ENCODE measurements at regions of chr17 and their contacts with region 1.

Region 1: DNA sequence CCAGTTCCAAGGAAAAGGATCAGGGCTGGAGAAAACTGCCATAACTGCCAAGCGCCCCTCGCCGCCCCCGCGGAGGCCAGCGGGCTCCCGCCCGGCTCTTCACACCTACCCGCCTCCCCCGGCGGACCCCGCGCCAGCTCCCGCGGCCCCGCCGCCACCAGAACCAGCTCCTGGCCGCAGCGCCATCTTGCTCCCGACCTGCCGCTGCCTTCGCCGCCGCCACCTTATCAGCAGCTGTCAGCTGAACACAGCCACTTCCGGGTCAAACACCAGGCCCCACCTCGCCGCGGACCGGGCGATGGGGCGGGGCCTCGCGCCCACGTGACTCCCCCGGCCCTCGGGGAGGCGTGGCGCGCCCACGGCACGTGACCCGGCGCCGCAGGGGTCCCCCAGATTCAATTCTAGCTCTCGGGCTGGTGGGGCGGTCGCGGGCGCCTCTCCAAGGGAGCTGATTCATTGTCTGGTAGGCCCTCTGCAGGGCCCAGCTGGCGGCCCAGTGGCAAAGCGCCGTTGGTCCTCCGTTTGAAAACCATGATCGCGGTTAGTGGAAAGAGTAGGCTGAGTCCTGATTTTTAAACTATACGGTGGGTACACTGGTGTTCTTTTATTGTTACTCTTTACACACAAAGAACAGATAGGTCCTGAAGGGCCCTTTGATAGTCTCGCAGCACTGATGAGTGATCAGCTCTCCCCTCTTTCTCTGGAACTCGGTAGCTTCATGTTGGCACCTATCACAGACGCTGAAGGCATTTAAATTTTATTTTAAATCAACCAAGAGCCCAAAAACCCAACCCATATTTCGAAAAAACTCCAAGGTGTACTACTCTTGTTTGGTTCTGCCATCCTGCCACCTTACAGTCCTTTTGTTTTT is at the start of gene SYNRG:
- DNase-seq: peak; percentile 93
- H3K4me3 Mint-ChIP-seq: peak within 1 kb of the TSS; percentile 84
- H3K27ac Mint-ChIP-seq: peak within 1 kb of the TSS; percentile 93
- H3K4me1 Mint-ChIP-seq: peaks cover 36% of the 10 kb centered on the region
- H3K27me3 Mint-ChIP-seq: no peaks in the 10 kb centered on the region
- total RNA-seq, gene SYNRG: 39.1 to 40.1 TPM

Region 2: DNA sequence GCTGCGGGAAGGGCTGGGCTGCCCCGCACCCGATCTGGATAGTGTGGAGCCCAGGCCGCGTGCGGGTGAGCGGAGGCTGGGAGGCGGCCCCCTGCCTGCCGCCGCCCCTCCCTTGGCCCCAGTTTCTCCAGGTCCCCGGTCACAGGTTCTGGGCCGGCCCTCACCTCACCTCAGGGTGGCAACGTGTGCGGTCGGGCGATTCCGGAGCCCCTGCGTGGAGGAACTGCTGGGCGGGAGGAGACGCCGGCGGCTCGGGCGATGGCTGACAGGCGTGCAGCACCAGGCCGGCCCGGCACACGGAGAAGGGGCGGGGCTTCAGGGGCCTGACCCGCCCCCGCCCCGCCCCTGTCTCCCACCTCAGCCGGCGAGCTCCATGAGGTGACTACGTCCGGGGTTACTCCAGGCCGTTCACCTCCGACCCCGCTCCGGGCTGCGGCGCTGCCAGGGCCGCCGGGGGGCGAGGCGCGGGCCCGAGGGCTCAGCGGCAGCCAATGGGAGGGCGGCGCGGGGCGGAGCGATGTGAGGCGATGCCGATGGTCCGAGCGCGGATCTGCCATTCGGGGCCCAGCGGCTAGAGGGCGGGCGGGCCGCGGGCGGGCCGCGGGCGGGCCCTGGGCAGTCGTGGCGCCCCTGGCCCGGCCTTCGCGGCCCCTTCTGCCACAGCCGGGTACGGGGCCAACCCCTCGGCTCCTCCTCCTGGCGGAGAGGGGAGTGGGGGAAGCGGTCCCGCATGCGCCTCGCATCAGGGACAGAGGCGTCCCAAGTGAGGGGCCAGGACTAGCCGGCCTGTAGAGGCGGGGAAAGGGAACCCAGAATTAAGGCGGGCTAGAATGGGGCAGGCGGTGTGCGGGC is 250.3 kb before region 1 on chr17:
- CTCF ChIA-PET with region 1: no interaction called
- intact Hi-C with region 1: loop called (anchors 2 kb)
- DNase-seq: peak; percentile 95
- H3K4me3 Mint-ChIP-seq: peak overlapping the region; percentile 86
- H3K27ac Mint-ChIP-seq: peak overlapping the region; percentile 76
- H3K4me1 Mint-ChIP-seq: peaks cover 21% of the 10 kb centered on the region
- H3K27me3 Mint-ChIP-seq: no peaks in the 10 kb centered on the region

Region 3: DNA sequence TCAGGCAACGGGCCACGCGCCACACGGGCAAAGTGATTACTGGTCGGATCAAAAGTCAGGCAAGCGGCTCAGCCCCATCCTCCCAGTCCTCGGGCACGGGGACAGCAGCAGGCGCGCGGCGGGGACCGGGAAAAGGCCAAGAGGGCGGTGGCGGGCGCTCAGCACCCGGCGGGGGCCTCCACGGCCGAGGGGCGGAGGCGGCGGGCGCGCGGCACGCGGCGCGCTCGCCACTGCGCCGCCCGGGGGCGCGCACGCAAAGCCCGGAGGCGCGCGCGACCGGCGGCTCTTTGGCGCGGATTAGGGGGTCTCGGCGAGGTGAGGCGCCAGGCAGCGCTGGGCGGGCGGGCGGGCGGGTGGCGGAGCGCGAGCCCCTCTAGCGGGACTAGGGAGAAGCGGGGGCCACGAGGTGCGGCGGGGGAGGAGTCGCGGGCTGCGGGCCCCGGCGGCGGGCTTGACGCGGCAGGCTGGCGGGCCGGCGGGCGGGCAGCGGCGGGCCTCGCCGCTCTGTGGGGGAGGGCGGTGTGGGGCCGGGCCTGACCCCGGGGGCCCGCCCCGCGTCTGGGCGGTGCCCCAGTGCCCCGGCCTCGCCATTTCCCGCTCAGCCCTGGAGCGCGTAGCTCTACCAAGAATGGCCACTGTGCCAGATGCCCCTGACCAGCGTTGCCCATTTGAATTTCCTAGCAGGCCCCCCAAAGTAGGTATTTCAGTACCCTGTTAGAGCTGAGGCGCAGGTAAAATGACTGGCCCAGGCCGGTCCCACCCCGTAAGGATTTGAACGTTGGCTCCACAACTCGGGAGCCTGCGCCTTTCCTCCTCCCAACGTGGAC is 202.6 kb before region 1 on chr17 and contains the starts of genes ACACA and TADA2A:
- CTCF ChIA-PET with region 1: no interaction called
- intact Hi-C with region 1: loop called (anchors 2 kb)
- DNase-seq: peak; percentile 74
- H3K4me3 Mint-ChIP-seq: peak within 1 kb of the TSS; percentile 97
- H3K27ac Mint-ChIP-seq: peak within 1 kb of the TSS; percentile 95
- H3K4me1 Mint-ChIP-seq: peaks cover 58% of the 10 kb centered on the region
- H3K27me3 Mint-ChIP-seq: no peaks in the 10 kb centered on the region
- total RNA-seq, gene ACACA: 52.6 to 59.8 TPM
- total RNA-seq, gene TADA2A: 27.3 to 29.5 TPM

Region 4: DNA sequence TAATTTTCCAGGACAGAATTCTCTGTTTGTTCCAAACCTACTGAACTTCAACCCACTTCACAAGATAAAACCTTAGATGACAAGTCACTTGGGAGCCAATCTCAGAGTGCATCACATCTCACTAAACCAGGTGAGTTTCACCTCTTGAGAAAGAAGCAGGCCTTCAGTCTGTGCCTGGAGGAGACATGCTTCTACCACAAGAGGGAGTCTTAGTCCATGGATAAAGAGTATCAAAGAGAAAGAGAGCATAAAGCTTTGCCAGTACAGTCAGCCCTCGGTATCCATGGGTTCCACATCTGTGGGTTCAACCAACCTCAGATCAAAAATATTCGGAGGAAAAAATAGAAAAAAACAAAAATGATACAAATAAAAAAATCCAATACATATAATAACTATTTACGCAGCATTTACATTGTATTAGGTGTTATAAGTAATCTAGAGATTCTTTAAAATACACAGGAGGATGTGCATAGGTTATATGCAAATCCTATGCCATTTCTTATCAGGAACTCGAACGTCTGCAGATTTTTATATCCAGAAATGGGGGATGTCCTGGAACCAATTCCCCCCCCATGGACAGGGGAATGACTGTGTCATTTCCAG is 82.1 kb before region 1 on chr17:
- CTCF ChIA-PET with region 1: interaction called, 6 read pairs
- intact Hi-C with region 1: loop called (anchors 2 kb)
- DNase-seq: peak; percentile 44
- H3K4me3 Mint-ChIP-seq: no peak overlapping the region
- H3K27ac Mint-ChIP-seq: no peak overlapping the region
- H3K4me1 Mint-ChIP-seq: peaks cover 7% of the 10 kb centered on the region
- H3K27me3 Mint-ChIP-seq: no peaks in the 10 kb centered on the region

Region 5: DNA sequence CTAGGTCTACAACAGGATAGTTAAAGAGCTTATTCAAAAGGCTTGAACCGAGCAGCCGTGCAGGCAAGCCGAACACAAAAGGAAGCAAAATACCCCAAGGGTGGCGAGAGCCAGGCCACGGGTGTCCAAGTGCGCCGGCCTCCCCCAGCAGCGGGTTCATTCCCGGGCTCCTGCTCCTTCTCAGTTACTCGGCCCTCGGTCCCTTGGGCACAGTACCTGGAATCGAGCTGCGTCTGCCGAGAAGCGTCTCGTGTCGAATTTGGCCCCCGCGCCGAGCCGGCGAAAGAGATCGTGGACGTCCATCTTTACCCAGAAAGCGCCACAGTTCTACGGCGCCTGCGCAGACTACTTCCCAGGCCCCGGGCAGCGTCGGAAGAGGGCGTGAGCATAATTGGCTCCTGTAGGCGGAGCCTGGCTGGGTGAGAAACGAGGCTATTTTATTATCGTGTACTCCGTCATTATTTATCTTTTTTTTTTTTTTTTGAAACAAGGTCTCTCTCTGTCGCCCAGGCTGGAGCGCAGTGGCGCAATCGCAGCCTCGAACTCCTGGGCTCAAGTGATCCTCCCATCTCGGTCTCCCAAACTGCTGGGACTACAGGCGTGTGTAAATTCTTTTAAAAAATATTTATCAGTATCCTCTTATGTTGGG is 33.8 kb after region 1 on chr17 and contains the start of gene DDX52:
- CTCF ChIA-PET with region 1: no interaction called
- intact Hi-C with region 1: loop called (anchors 2 kb)
- DNase-seq: peak; percentile 93
- H3K4me3 Mint-ChIP-seq: peak within 1 kb of the TSS; percentile 87
- H3K27ac Mint-ChIP-seq: peak within 1 kb of the TSS; percentile 81
- H3K4me1 Mint-ChIP-seq: peaks cover 23% of the 10 kb centered on the region
- H3K27me3 Mint-ChIP-seq: peaks cover 13% of the 10 kb centered on the region
- total RNA-seq, gene DDX52: 18.5 to 20.2 TPM

Region 6: GRCh38 chr17:37770631-37771518 is 161.5 kb after region 1 on chr17:
- CTCF ChIA-PET with region 1: interaction called, 5 read pairs
- intact Hi-C with region 1: loop called (anchors 1 kb)
- DNase-seq: peak; percentile 72
- H3K4me3 Mint-ChIP-seq: no peak overlapping the region
- H3K27ac Mint-ChIP-seq: no peak overlapping the region
- H3K4me1 Mint-ChIP-seq: peaks cover 22% of the 10 kb centered on the region
- H3K27me3 Mint-ChIP-seq: peaks cover 27% of the 10 kb centered on the region

Measured in activated naive CD4-positive, alpha-beta T cell treated with anti-CD3 and anti-CD28 coated beads for 36 hours (primary cell).